Astrocyte of the cerebellum (primary cell): ENCODE measurements at regions of chr16 and their contacts with region 1.

Region 1: GRCh38 chr16:4624827-4625559 is 367 bp downstream of the MGRN1 start:
- DNase-seq: no peak
- H3K4me3 ChIP-seq: peak overlapping the region; percentile 89
- CTCF ChIP-seq: no peak

Region 2: DNA sequence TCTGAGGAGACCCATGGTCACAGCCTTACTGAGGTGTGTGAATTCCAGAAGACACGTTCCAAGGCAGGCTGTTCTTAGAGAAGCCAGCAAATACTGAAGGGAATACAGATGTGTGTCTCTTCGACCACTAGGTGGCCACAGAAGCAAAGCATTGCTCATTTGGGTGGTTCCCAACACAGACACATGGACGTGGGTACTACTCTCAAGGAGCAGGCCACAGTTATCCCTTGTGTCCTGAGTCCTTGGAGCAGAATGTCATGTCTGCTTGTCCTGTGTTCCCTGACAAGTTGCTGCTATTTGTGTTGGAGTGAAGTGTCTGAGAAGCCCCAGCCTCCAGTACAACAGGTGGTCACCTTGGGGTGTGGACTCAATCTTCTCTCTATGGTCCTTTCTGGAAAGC is 118.5 kb before region 1 on chr16:
- in situ Hi-C with region 1: loop called (anchors 25 kb)
- DNase-seq: peak; percentile 71
- H3K4me3 ChIP-seq: no peak overlapping the region
- CTCF ChIP-seq: peak; percentile 87

Region 3: GRCh38 chr16:4538350-4539235 is 86.4 kb before region 1 on chr16 and contains the start of gene CDIP1:
- in situ Hi-C with region 1: no loop called
- DNase-seq: peak; percentile 81
- H3K4me3 ChIP-seq: peak within 1 kb of the TSS; percentile 58
- CTCF ChIP-seq: no peak